Mammary epithelial cell (primary cell): ENCODE measurements at regions of chr13 and their contacts with region 1.

Region 1: DNA sequence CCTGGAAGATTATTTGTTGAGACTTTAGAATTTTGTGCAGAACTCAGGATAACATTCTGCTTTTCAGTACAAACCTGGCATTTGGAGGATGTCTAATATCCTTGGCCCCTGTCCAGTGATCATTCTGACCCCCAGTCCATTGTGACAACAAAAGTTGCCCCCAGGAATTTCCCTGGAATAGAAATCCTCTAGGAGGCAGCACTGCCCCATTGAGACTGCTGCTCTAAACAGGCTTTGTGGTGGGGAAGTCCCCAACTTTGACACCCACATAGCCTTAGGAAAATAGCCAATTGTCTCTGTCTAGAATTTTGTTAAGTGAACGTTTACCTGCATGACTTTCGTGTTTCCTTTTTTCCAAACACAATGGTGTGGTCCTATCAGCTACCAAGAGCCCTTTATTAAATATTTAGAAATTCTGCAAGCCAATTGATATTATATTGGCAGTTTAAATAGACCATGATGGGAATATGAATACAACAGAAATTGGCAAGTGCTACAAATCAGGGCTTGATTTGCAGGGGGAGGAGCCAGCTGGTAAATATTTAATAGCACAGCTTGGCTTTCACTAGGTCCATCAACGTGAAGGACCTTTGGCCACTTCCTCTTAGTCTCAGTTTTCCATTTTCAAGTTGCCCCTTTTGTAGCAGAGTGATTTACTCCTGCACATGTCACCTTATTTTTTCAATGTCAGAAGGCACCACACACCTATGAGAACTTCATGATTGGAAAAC is 451.7 kb downstream of the EFNB2 start:
- DNase-seq: peak; percentile 71
- H3K4me3 ChIP-seq: no peak overlapping the region
- H3K27ac ChIP-seq: peak overlapping the region; percentile 14
- H3K4me1 ChIP-seq: peaks cover 6% of the 10 kb centered on the region
- H3K27me3 ChIP-seq: no peaks in the 10 kb centered on the region
- CTCF ChIP-seq: peak; percentile 87 to 90

Region 2: DNA sequence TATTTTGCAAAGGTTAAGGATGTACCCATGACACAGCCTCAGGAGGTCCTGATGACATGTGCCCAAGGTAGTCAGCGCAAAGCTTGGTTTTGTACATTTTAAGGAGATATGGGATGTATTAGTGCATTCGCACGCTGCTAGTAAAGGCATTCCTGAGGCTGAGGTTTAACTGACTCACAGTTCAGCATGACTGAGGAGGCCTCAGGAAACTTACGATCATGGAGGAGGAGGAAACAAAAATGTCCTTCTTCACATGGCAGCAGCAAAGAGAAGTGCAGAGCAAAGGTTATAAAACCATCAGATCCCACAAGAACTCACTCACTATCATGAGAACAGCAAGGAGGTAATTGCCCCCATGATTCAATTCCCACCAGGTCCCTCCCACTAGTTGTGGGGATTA is 565.7 kb before region 1 on chr13:
- CTCF ChIA-PET with region 1: no interaction called
- dilution Hi-C with region 1: no loop called
- in situ Hi-C with region 1: no loop called
- intact Hi-C with region 1: loop called (anchors 10 kb)
- DNase-seq: no peak
- H3K4me3 ChIP-seq: no peak overlapping the region
- H3K27ac ChIP-seq: no peak overlapping the region
- H3K4me1 ChIP-seq: no peaks in the 10 kb centered on the region
- H3K27me3 ChIP-seq: no peaks in the 10 kb centered on the region
- CTCF ChIP-seq: no peak

Region 3: GRCh38 chr13:106507560-106508274 is 423.9 kb after region 1 on chr13:
- CTCF ChIA-PET with region 1: no interaction called
- dilution Hi-C with region 1: loop called (anchors 5 kb)
- in situ Hi-C with region 1: no loop called
- intact Hi-C with region 1: no loop called
- DNase-seq: peak; percentile 97
- H3K4me3 ChIP-seq: peak overlapping the region; percentile 8 to 51 (median 45)
- H3K27ac ChIP-seq: peak overlapping the region; percentile 98
- H3K4me1 ChIP-seq: peaks cover 35% of the 10 kb centered on the region
- H3K27me3 ChIP-seq: no peaks in the 10 kb centered on the region
- CTCF ChIP-seq: no peak

Region 4: DNA sequence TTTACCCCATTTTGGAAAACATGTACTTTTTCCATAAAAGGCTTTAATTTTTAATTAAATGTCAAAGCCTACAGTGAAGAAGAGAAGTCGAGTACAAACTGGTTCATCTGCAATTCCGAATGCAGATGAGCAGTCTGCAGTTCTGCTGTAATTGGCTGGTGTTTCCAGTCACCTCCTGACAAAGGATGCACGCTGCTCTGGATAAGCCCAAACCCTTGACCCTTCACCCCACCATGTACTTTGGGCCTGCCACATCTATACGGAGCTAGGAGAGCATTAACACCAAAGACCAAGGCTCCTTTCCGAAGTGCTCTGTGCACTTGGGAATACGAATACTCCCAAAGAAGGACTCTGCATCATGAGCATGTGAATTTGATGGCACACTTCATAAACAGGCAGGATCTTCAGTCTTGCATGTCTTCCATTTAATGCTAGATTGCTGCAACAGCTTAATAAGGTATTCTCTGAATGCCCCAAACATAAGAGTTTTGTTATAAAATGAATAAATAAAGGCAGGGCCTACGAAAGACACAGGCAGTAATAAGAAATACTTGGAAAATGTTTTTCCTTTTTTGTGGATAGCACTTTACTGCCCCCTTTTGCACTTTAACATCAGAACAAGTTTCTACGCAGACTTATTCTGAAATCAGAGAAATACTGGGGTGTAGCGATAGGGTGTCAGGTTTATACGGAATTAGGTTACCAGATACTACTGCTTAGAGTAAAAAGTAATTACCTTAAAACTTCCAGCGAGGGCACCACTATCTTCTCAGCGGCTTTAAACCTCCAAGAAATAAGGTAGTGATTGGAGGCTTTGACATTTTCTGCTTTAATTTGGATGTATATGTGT is 436.6 kb after region 1 on chr13:
- CTCF ChIA-PET with region 1: no interaction called
- dilution Hi-C with region 1: no loop called
- in situ Hi-C with region 1: loop called (anchors 5 to 10 kb)
- intact Hi-C with region 1: no loop called
- DNase-seq: no peak
- H3K4me3 ChIP-seq: no peak overlapping the region
- H3K27ac ChIP-seq: no peak overlapping the region
- H3K4me1 ChIP-seq: peaks cover 30% of the 10 kb centered on the region
- H3K27me3 ChIP-seq: no peaks in the 10 kb centered on the region
- CTCF ChIP-seq: peak in 1 of 2 donors; percentile 31

Region 5: GRCh38 chr13:107025978-107026377 is 942.2 kb after region 1 on chr13:
- CTCF ChIA-PET with region 1: no interaction called
- dilution Hi-C with region 1: no loop called
- in situ Hi-C with region 1: no loop called
- intact Hi-C with region 1: no loop called
- DNase-seq: peak; percentile 2
- H3K4me3 ChIP-seq: no peak overlapping the region
- H3K27ac ChIP-seq: no peak overlapping the region
- H3K4me1 ChIP-seq: no peaks in the 10 kb centered on the region
- H3K27me3 ChIP-seq: no peaks in the 10 kb centered on the region
- CTCF ChIP-seq: no peak

Region 6: GRCh38 chr13:107124129-107124718 is 1040.4 kb after region 1 on chr13:
- CTCF ChIA-PET with region 1: no interaction called
- dilution Hi-C with region 1: no loop called
- in situ Hi-C with region 1: no loop called
- intact Hi-C with region 1: loop called (anchors 10 kb)
- DNase-seq: no peak
- H3K4me3 ChIP-seq: no peak overlapping the region
- H3K27ac ChIP-seq: no peak overlapping the region
- H3K4me1 ChIP-seq: no peaks in the 10 kb centered on the region
- H3K27me3 ChIP-seq: no peaks in the 10 kb centered on the region
- CTCF ChIP-seq: peak in 1 of 2 donors; percentile 50